Psoas muscle (tissue), 8 donors: ENCODE measurements at regions of chr17 and their contacts with region 1.

Region 1: DNA sequence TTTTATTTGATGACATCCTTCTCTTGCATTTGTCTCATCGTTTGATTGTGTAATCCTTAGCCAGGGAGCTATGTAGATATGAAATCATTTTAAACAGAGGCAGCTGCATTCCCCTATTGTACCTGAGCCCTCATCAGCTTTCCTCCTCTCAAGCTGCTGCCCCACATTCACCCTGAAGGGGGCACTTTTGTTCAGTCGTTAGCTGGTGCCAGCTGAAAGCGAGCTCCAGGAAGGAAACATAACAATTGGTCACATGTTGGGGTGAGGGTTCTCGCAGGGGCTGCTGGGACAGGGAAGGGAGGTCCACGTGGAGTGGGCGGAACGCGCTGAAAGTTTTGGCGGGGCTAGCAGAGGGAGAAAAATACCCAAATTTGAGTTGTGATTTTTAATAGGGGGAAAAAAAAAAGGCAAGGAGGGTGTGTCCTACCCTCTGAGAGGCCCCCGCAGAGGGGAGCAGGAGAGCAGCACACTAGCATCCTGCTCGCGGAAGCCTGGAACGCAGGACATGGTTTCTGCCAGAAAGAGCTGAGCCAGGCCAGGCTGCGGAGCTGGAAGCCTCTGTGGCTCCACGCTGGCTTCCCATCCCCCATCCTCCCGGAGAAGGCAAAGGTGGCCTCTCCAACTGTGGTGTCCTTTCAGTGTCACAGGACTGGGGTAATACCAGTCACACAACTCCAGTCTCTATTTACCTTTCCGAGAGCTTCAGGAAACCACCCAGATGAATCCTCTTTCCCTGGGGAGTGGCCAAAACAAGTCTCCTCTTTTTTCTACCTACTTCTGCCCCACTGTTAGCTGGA is 8.5 kb upstream of the MSL1 start:
- DNase-seq: peak; percentile 90 to 94
- ATAC-seq: peak; percentile 75 to 80 (median 76)
- H3K4me3 ChIP-seq: peak overlapping the region; percentile 74
- H3K27ac ChIP-seq: peak overlapping the region; percentile 99
- H3K4me1 ChIP-seq: peaks cover 62% of the 10 kb centered on the region
- H3K27me3 ChIP-seq: no peaks in the 10 kb centered on the region
- CTCF ChIP-seq: peak; percentile 81

Region 2: DNA sequence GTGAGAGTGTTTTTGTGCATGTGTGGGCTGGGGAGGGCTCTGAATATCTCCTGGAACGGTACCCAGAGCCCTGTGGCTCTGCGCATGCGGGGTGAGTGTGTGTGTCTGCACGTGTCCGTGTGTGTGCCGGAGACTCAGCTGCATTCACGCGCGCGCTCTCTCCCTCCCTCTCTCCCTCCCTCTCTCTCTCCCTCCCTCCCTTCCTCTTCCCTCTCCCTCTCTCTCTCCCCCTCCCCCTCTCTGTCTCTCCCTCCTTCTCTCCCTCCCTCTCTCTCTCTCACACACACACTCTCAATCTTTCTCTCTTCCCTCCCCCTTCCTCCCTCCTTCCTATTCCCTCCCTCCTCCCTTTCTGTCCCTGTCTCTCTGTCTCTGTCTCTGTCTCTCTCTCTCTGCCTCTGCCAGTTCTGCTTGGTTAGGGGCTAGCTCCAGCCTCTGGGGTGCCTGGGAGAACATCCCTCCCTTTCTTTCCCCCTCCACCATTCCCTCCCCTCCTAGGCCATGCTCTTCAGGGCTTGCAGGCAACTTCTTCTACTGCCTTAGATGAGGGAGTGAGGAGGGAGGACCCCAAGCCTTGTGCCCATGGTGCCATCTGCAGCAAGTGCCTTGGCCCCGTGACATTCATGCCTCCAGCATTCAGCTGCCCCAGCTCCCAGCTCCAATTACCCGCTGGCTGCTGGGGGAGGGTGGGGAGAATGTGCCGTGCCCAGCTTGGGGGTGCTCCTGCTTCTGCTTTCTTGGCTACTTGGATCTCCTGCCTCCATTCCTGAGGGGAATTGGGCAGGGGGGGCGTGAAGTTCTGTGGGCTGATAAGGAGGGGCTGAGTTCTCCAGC is 44.2 kb before region 1 on chr17:
- intact Hi-C with region 1: loop called in 1 of 2 experiments (anchors 2 kb)
- DNase-seq: peak; percentile 93 to 96
- ATAC-seq: peak; percentile 63 to 67 (median 64)
- H3K4me3 ChIP-seq: peak overlapping the region; percentile 63
- H3K27ac ChIP-seq: peak overlapping the region; percentile 94
- H3K4me1 ChIP-seq: peaks cover 86% of the 10 kb centered on the region
- H3K27me3 ChIP-seq: no peaks in the 10 kb centered on the region
- CTCF ChIP-seq: no peak

Region 3: GRCh38 chr17:40168262-40168832 is 55.0 kb after region 1 on chr17:
- intact Hi-C with region 1: loop called (anchors 2 kb)
- DNase-seq: no peak
- ATAC-seq: peak; percentile 68 to 79 (median 70)
- H3K4me3 ChIP-seq: no peak overlapping the region
- H3K27ac ChIP-seq: peak overlapping the region; percentile 31
- H3K4me1 ChIP-seq: no peaks in the 10 kb centered on the region
- H3K27me3 ChIP-seq: no peaks in the 10 kb centered on the region
- CTCF ChIP-seq: peak; percentile 81

Region 4: GRCh38 chr17:40251576-40251975 is 138.3 kb after region 1 on chr17:
- intact Hi-C with region 1: no loop called
- DNase-seq: no peak
- ATAC-seq: peak; percentile 69 to 88 (median 83)
- H3K4me3 ChIP-seq: no peak overlapping the region
- H3K27ac ChIP-seq: no peak overlapping the region
- H3K4me1 ChIP-seq: peaks cover 12% of the 10 kb centered on the region
- H3K27me3 ChIP-seq: no peaks in the 10 kb centered on the region
- CTCF ChIP-seq: no peak